IMR-90 (cell line): ENCODE measurements at regions of chr18 and their contacts with region 1.

Region 1: DNA sequence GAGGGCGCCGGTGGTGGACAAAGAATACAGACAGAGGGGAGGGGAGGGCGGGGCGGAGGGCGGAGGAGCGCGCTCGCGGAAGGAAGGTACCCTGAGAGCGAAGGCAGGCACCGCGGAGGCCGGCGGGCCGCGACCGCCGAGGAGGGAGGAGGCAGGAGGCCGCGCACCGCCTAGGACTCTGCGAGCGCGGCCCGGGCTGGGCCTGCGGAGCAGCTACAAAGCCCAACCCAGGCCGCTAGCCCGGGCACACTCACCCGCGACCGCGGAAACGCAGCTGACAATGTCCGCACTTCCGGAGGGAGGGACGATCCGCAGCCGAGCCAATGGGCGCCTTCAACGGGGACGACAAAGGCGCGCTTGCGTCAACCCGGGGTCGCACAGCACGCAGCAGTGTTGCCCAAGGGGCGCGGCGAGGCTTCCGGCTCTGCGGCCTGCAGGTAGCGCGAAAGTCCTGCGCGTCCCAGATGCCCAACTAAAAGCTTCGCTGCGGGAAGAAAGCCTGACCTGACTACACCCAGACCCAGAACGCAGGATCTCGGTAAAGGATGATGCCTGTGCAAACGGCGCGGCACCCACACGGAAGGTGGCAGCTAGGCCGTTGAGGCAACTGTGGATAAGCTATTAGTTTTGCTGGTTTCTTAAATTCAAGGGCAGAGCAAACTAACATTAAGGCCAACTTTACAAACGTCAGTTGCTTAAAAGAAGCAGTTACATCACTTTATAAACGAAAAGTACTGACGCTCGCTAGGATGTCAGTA is at the start of gene C18orf32:
- DNase-seq: peak; percentile 93
- ATAC-seq: peak; percentile 94
- H3K4me3 ChIP-seq: peak within 1 kb of the TSS; percentile 71
- H3K27ac ChIP-seq: peak within 1 kb of the TSS; percentile 78
- H3K4me1 ChIP-seq: peaks cover 2% of the 10 kb centered on the region; the same call in 1 of the 2 replicates
- H3K27me3 ChIP-seq: no peaks in the 10 kb centered on the region
- CTCF ChIP-seq: no peak
- POLR2A ChIP-seq: peak; percentile 93
- RAD21 ChIP-seq: no peak
- total RNA-seq, gene C18orf32: 3.6 and 4.7 TPM in 2 replicates

Region 2: DNA sequence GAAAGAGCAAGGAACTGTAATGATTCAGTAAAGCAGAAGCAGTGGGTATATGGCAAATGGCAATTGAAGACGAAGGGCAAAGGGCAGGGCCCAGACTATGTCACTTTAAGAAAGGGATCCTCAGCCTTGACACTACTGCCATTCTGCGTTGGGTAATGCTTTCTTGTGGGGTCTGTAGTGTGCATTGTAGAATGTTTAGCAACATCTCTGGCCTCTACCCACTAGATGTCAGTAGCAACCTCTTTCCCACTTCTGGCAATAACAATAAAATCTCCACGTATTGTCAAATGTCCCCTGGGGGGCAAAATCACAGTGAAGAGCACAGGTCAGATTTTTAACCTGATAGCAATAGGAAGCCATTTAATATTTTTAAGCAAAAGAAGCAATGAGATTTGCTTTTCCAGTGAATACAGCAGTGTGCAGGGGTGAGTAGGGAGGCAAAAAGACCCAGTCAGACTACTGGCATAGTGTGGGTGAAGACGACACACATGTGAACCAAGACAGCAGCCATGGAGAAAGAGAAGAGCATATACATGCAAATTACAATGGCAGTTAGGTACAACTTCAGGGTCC is 236.2 kb before region 1 on chr18:
- CTCF ChIA-PET with region 1: no interaction called
- POLR2A ChIA-PET with region 1: no interaction called
- dilution Hi-C with region 1: no loop called
- in situ Hi-C with region 1: no loop called
- intact Hi-C with region 1: loop called (anchors 2 kb)
- DNase-seq: peak; percentile 47
- ATAC-seq: peak; percentile 69; the same call in 1 of the 2 replicates
- H3K4me3 ChIP-seq: no peak overlapping the region
- H3K27ac ChIP-seq: no peak overlapping the region
- H3K4me1 ChIP-seq: peaks cover 4% of the 10 kb centered on the region
- H3K27me3 ChIP-seq: no peaks in the 10 kb centered on the region
- CTCF ChIP-seq: peak; percentile 58
- POLR2A ChIP-seq: no peak
- RAD21 ChIP-seq: peak; percentile 71

Region 3: DNA sequence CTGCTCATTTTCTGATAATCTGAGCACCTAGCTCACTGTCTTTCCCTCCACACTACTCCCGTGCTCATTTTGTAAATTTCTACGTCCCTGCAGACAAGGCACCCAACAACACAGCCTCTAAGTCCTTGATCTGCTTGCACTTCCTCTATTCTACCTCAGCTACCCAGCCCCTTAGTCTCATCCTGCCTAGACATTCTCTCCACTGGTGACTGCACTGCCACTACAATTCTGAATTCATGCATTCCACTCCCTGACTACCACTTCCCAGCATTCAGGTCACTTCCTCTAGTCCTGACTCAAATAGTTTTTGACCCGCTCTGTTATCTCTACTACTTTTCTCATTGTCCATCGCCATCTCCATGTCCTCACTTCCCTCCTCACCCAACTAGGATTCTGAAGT is 182.4 kb before region 1 on chr18:
- CTCF ChIA-PET with region 1: no interaction called
- POLR2A ChIA-PET with region 1: no interaction called
- dilution Hi-C with region 1: no loop called
- in situ Hi-C with region 1: no loop called
- intact Hi-C with region 1: no loop called
- DNase-seq: peak; percentile 6
- ATAC-seq: no peak
- H3K4me3 ChIP-seq: no peak overlapping the region
- H3K27ac ChIP-seq: no peak overlapping the region
- H3K4me1 ChIP-seq: no peaks in the 10 kb centered on the region
- H3K27me3 ChIP-seq: no peaks in the 10 kb centered on the region
- CTCF ChIP-seq: no peak
- POLR2A ChIP-seq: no peak
- RAD21 ChIP-seq: no peak

Region 4: GRCh38 chr18:49849331-49850217 is 362.4 kb after region 1 on chr18:
- CTCF ChIA-PET with region 1: no interaction called
- POLR2A ChIA-PET with region 1: no interaction called
- dilution Hi-C with region 1: no loop called
- in situ Hi-C with region 1: loop called (anchors 10 kb)
- intact Hi-C with region 1: no loop called
- DNase-seq: peak; percentile 92
- ATAC-seq: peak; percentile 89
- H3K4me3 ChIP-seq: no peak overlapping the region
- H3K27ac ChIP-seq: no peak overlapping the region
- H3K4me1 ChIP-seq: peaks cover 7% of the 10 kb centered on the region
- H3K27me3 ChIP-seq: peaks cover 2% of the 10 kb centered on the region; the same call in 1 of the 2 replicates
- CTCF ChIP-seq: no peak
- POLR2A ChIP-seq: no peak
- RAD21 ChIP-seq: no peak

Region 5: GRCh38 chr18:50287441-50288347 is 800.6 kb after region 1 on chr18 and contains the start of gene CXXC1:
- CTCF ChIA-PET with region 1: no interaction called
- POLR2A ChIA-PET with region 1: no interaction called
- dilution Hi-C with region 1: no loop called
- in situ Hi-C with region 1: no loop called
- intact Hi-C with region 1: loop called (anchors 10 kb)
- DNase-seq: peak; percentile 100
- ATAC-seq: peak; percentile 96
- H3K4me3 ChIP-seq: peak within 1 kb of the TSS; percentile 60
- H3K27ac ChIP-seq: peak within 1 kb of the TSS; percentile 33
- H3K4me1 ChIP-seq: peaks cover 3% of the 10 kb centered on the region; the same call in 1 of the 2 replicates
- H3K27me3 ChIP-seq: peaks cover 5% of the 10 kb centered on the region; the same call in 1 of the 2 replicates
- CTCF ChIP-seq: peak; percentile 56
- POLR2A ChIP-seq: no peak
- RAD21 ChIP-seq: no peak
- total RNA-seq, gene CXXC1: 24.0 and 29.4 TPM in 2 replicates